ENCODE measurements at regions of chrX and their contacts with region 1.

Region 1: GRCh38 chrX:103533511-103534216 is 14.4 kb upstream of the RAB40A start:
- DNase-seq: peak; percentile 64
- ATAC-seq: peak; percentile 90
- H3K4me3 ChIP-seq: peak overlapping the region; percentile 38 to 54
- H3K27ac ChIP-seq: peak overlapping the region; percentile 63; the same call in 1 of the 2 replicates
- H3K4me1 ChIP-seq: no peaks in the 10 kb centered on the region
- H3K27me3 ChIP-seq: no peaks in the 10 kb centered on the region
- CTCF ChIP-seq: peak; percentile 86

Region 2: DNA sequence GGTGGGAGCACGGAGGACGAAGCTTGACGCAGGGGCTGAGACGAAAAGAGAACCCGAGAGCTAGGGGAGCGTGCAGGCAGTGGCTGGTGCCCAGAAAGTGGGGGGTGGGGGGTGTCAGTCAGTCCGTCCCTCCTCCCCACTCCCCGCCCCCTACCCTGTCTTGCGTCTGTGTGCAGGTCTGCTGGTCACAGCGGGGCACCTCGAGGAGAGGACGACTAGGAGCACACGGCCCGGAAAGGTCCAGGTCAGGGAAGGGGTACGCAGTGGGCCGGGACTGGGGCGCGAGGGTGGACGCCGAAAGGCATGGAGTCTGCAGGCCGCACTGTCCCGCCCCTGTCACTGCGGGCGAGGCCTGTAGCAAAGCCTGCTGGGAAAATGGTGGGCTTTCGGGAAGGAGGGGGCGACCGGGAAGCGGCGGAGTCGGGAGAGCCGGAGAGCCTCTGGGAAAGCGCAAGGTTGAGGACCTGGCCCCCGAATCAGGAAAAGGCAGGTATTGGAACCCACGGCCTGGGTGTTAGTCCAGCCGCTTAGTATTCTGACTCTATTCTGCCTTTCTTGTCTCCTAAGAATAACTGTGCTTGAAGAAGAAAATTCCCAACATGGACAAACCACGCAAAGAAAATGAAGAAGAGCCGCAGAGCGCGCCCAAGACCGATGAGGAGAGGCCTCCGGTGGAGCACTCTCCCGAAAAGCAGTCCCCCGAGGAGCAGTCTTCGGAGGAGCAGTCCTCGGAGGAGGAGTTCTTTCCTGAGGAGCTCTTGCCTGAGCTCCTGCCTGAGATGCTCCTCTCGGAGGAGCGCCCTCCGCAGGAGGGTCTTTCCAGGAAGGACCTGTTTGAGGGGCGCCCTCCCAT is 95.9 kb after region 1 on chrX:
- CTCF ChIA-PET with region 1: interaction called, 7 read pairs
- POLR2A ChIA-PET with region 1: interaction called, 3 read pairs
- in situ Hi-C with region 1: no loop called
- intact Hi-C with region 1: loop called (anchors 2 kb)
- DNase-seq: peak; percentile 58
- ATAC-seq: peak; percentile 89
- H3K4me3 ChIP-seq: peak overlapping the region; percentile 80 to 96
- H3K27ac ChIP-seq: peak overlapping the region; percentile 97
- H3K4me1 ChIP-seq: peaks cover 9% of the 10 kb centered on the region; the same call in 1 of the 2 replicates
- H3K27me3 ChIP-seq: no peaks in the 10 kb centered on the region
- CTCF ChIP-seq: peak; percentile 90

Region 3: GRCh38 chrX:103674531-103675454 is 141.1 kb after region 1 on chrX:
- CTCF ChIA-PET with region 1: no interaction called
- POLR2A ChIA-PET with region 1: no interaction called
- in situ Hi-C with region 1: no loop called
- intact Hi-C with region 1: loop called (anchors 5 kb)
- DNase-seq: no peak
- ATAC-seq: peak; percentile 70
- H3K4me3 ChIP-seq: no peak overlapping the region
- H3K27ac ChIP-seq: no peak overlapping the region
- H3K4me1 ChIP-seq: peaks cover 23% of the 10 kb centered on the region
- H3K27me3 ChIP-seq: no peaks in the 10 kb centered on the region
- CTCF ChIP-seq: no peak

Region 4: GRCh38 chrX:103817502-103817901 is 283.8 kb after region 1 on chrX:
- CTCF ChIA-PET with region 1: no interaction called
- POLR2A ChIA-PET with region 1: no interaction called
- in situ Hi-C with region 1: no loop called
- intact Hi-C with region 1: loop called (anchors 1 kb)
- DNase-seq: peak; percentile 46
- ATAC-seq: peak; percentile 88
- H3K4me3 ChIP-seq: no peak overlapping the region
- H3K27ac ChIP-seq: no peak overlapping the region
- H3K4me1 ChIP-seq: no peaks in the 10 kb centered on the region
- H3K27me3 ChIP-seq: no peaks in the 10 kb centered on the region
- CTCF ChIP-seq: peak; percentile 70; the same call in 1 of the 2 replicates

Measured in Panc1 (cell line).